Activated B cell treated with CpG ODN at 0.5 μM for 24 hours (primary cell): ENCODE measurements at regions of chr12 and their contacts with region 1.

Region 1: GRCh38 chr12:25250744-25251730 is at the start of gene KRAS:
- DNase-seq: peak; percentile 88
- ATAC-seq: peak; percentile 85
- H3K4me3 Mint-ChIP-seq: peak within 1 kb of the TSS; percentile 95
- H3K27ac Mint-ChIP-seq: peak within 1 kb of the TSS; percentile 95
- H3K4me1 Mint-ChIP-seq: peaks cover 48% of the 10 kb centered on the region
- H3K27me3 Mint-ChIP-seq: no peaks in the 10 kb centered on the region
- CTCF ChIP-seq: no peak
- total RNA-seq, gene KRAS: 43.3 and 45.8 TPM in 2 replicates

Region 2: DNA sequence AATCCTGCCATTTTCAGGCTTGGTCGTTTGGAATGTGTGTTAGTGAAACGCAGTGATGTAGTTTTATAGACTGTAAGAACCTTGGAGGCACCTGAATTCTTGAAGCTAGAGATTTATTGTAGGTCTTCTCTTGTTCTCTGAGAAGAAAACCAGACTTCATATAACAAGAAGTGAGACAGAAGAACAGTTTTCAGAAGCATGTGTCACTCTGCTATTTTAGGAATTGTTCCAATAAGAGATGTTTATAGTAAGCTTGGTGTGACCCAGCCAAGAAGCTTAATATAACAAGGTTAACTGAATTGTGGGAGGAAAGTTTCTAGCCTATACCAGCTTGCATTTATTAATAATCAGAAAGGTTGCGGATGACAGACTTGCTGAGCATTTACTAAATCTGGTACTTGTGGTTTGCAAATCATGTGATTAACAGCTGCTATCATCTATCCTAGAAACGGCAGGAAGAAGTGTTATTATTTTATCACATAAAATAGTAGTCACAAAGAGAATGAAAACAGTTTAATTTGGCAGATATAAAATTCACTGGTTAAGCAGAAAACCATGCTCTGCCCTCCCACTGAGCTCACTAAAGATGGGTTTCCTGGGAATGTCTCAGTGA is 253.0 kb before region 1 on chr12:
- CTCF ChIA-PET with region 1: no interaction called
- POLR2A ChIA-PET with region 1: no interaction called
- intact Hi-C with region 1: loop called (anchors 1 kb)
- DNase-seq: no peak
- ATAC-seq: peak; percentile 74
- H3K4me3 Mint-ChIP-seq: peak overlapping the region; percentile 69
- H3K27ac Mint-ChIP-seq: peak overlapping the region; percentile 97
- H3K4me1 Mint-ChIP-seq: peaks cover 90% of the 10 kb centered on the region
- H3K27me3 Mint-ChIP-seq: no peaks in the 10 kb centered on the region
- CTCF ChIP-seq: no peak

Region 3: DNA sequence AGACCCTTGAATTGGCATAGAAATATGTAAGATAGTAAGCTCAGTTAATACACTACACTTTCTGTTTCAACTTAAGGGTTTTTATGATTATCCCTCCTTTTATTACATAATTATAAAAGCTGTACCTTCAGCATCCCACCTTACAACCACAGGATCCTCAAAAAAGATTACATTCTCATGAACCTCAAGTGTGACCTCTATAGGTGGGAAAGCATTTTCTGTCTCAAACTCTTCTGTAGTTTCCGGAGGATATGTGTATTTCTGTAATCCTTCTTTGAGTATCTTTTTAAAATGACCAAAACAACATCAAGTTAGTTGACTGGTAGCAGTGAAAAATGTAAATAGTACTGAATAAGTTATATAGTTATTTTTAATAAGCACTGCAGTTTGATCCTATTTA is 132.0 kb before region 1 on chr12:
- CTCF ChIA-PET with region 1: no interaction called
- POLR2A ChIA-PET with region 1: no interaction called
- intact Hi-C with region 1: no loop called
- DNase-seq: no peak
- ATAC-seq: no peak
- H3K4me3 Mint-ChIP-seq: no peak overlapping the region
- H3K27ac Mint-ChIP-seq: no peak overlapping the region
- H3K4me1 Mint-ChIP-seq: peaks cover 6% of the 10 kb centered on the region
- H3K27me3 Mint-ChIP-seq: no peaks in the 10 kb centered on the region
- CTCF ChIP-seq: no peak

Region 4: GRCh38 chr12:25195056-25195971 is 55.7 kb before region 1 on chr12 and contains the starts of genes DNAI7 and ETFRF1:
- CTCF ChIA-PET with region 1: no interaction called
- POLR2A ChIA-PET with region 1: interaction called, 4 read pairs
- intact Hi-C with region 1: loop called (anchors 1 kb)
- DNase-seq: peak; percentile 98
- ATAC-seq: peak; percentile 97
- H3K4me3 Mint-ChIP-seq: peak within 1 kb of the TSS; percentile 94
- H3K27ac Mint-ChIP-seq: peak within 1 kb of the TSS; percentile 96
- H3K4me1 Mint-ChIP-seq: peaks cover 34% of the 10 kb centered on the region
- H3K27me3 Mint-ChIP-seq: no peaks in the 10 kb centered on the region
- CTCF ChIP-seq: no peak
- total RNA-seq, gene DNAI7: 0.15 and 0.27 TPM in 2 replicates
- total RNA-seq, gene ETFRF1: 15.4 and 17.6 TPM in 2 replicates

Region 5: GRCh38 chr12:25269701-25270100 is 18.7 kb after region 1 on chr12:
- CTCF ChIA-PET with region 1: no interaction called
- POLR2A ChIA-PET with region 1: interaction called, 13 read pairs
- intact Hi-C with region 1: loop called (anchors 1 kb)
- DNase-seq: no peak
- ATAC-seq: peak; percentile 96
- H3K4me3 Mint-ChIP-seq: no peak overlapping the region
- H3K27ac Mint-ChIP-seq: peak overlapping the region; percentile 79
- H3K4me1 Mint-ChIP-seq: peaks cover 17% of the 10 kb centered on the region
- H3K27me3 Mint-ChIP-seq: no peaks in the 10 kb centered on the region
- CTCF ChIP-seq: no peak

Region 6: DNA sequence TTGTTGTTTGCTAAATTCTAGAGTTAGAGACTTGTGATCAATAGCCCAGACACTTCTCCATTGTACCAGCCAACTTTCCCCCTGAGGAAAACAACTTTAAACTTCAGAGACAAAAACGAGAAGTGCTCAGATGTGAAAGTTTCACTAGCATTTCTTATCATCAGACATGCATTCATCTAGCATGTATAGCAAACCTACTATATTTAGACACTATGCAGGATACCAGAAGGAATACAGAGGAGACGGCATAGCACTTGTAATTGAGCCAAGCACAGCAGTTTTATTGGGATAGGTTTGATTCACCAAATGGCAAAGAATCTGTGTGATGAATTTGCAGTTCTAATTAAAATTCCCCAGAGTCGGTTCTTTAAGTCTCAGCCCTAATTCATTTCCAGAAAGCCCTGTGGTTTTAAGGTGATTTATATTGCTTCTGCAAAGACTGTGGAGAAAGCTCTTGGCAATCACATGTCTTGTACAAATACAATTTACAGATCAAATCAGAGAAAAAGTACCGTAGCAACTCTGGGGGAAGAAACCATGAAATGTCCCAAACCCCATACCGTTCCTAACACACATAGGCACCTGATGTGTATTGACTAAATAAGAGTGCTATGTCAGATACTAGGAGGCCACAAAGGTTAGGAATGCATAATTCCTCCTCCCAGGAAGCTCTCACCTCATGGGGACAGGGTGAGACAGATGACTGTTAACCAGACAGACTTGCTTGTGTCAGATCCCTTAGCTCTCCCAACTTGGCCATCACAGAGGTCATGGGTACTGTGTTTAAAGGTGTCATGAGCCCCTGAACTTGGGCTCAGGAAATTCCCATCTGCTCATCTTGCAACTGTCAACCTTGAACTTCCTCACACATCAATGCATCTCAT is 69.3 kb after region 1 on chr12:
- CTCF ChIA-PET with region 1: no interaction called
- POLR2A ChIA-PET with region 1: interaction called, 26 read pairs
- intact Hi-C with region 1: loop called (anchors 1 kb)
- DNase-seq: no peak
- ATAC-seq: peak; percentile 71
- H3K4me3 Mint-ChIP-seq: peak overlapping the region; percentile 52
- H3K27ac Mint-ChIP-seq: peak overlapping the region; percentile 83
- H3K4me1 Mint-ChIP-seq: peaks cover 73% of the 10 kb centered on the region
- H3K27me3 Mint-ChIP-seq: no peaks in the 10 kb centered on the region
- CTCF ChIP-seq: no peak

Region 7: GRCh38 chr12:25328072-25328712 is 77.2 kb after region 1 on chr12:
- CTCF ChIA-PET with region 1: no interaction called
- POLR2A ChIA-PET with region 1: interaction called, 29 read pairs
- intact Hi-C with region 1: loop called (anchors 2 kb)
- DNase-seq: no peak
- ATAC-seq: peak; percentile 47
- H3K4me3 Mint-ChIP-seq: no peak overlapping the region
- H3K27ac Mint-ChIP-seq: no peak overlapping the region
- H3K4me1 Mint-ChIP-seq: peaks cover 25% of the 10 kb centered on the region
- H3K27me3 Mint-ChIP-seq: no peaks in the 10 kb centered on the region
- CTCF ChIP-seq: no peak

Region 8: GRCh38 chr12:25376985-25377384 is 125.9 kb after region 1 on chr12:
- CTCF ChIA-PET with region 1: no interaction called
- POLR2A ChIA-PET with region 1: no interaction called
- intact Hi-C with region 1: no loop called
- DNase-seq: no peak
- ATAC-seq: no peak
- H3K4me3 Mint-ChIP-seq: no peak overlapping the region
- H3K27ac Mint-ChIP-seq: no peak overlapping the region
- H3K4me1 Mint-ChIP-seq: peaks cover 7% of the 10 kb centered on the region
- H3K27me3 Mint-ChIP-seq: no peaks in the 10 kb centered on the region
- CTCF ChIP-seq: no peak